Sigmoid colon (tissue), 7 donors: ENCODE measurements at regions of chr19 and their contacts with region 1.

Region 1: DNA sequence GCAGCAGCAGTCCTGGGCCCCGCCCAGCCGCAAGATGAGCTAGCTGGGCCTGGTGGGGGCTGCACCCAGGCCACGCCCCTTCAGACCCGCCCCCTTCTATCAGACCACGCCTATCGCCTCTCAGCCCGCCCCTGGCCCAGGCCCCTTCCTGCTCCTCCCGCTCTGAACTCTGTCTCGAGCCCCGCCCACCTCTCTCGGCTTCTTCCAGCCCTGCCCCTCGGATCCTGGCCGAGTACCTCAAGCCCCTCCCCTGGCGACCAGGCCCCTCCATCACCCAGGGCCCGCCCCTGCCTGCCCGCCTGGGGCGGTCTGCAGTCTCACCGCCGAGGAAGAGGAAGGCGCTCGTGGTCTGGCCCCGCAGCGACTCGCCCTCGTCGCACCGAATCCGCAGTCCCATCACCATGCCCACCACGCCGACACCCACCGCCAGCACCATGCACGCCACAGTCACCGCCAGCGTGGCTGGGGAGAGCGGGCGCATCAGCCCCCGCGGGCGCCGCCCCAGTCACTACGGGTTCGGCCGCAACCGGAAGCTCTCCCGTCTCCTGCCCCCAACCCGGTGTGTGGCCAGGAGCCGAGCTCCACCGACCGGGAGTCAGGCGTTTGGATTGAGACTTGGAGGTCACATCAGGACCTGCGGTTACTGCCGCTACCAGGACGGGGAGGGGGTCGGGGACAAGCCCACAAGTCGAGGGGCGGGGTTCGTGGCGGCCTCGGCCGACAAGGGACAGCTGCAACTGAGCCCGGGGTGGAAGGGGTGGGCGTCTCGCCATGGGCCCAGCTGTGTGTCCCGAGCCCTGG is 1.0 kb downstream of the CLDND2 start:
- DNase-seq: peak; percentile 100
- H3K4me3 ChIP-seq: peak overlapping the region; percentile 64 to 93 (median 74)
- H3K27ac ChIP-seq: peak overlapping the region; percentile 97 to 100 (median 98)
- H3K4me1 ChIP-seq: peaks cover 0 to 46% (median 26%) of the 10 kb centered on the region in 4 donors
- H3K27me3 ChIP-seq: no peaks in the 10 kb centered on the region
- CTCF ChIP-seq: no peak
- EP300 ChIP-seq: no peak
- POLR2A ChIP-seq: no peak

Region 2: DNA sequence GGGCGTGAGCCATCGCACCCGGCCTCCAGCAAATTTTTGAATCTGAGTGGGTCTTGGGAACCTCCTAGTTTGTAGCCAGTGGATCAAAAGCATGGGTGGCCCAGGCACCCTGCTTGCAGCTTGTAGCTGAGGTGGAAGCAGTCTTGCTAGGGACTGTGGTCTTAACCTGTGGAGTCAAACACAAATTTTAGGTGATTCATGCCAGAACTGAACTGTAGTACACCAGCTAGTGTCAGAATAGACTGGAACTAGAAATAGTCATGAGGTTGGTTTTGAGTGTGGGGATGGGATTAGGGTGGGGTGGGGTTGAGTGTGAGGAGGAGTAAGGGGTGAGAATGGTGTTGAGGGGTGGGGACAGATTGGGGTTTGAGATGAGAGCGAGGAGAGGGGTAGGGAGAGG is 14.2 kb after region 1 on chr19:
- intact Hi-C with region 1: no loop called
- DNase-seq: no peak
- H3K4me3 ChIP-seq: no peak overlapping the region
- H3K27ac ChIP-seq: no peak overlapping the region
- H3K4me1 ChIP-seq: no peaks in the 10 kb centered on the region
- H3K27me3 ChIP-seq: no peaks in the 10 kb centered on the region
- CTCF ChIP-seq: no peak
- EP300 ChIP-seq: no peak
- POLR2A ChIP-seq: no peak

Region 3: DNA sequence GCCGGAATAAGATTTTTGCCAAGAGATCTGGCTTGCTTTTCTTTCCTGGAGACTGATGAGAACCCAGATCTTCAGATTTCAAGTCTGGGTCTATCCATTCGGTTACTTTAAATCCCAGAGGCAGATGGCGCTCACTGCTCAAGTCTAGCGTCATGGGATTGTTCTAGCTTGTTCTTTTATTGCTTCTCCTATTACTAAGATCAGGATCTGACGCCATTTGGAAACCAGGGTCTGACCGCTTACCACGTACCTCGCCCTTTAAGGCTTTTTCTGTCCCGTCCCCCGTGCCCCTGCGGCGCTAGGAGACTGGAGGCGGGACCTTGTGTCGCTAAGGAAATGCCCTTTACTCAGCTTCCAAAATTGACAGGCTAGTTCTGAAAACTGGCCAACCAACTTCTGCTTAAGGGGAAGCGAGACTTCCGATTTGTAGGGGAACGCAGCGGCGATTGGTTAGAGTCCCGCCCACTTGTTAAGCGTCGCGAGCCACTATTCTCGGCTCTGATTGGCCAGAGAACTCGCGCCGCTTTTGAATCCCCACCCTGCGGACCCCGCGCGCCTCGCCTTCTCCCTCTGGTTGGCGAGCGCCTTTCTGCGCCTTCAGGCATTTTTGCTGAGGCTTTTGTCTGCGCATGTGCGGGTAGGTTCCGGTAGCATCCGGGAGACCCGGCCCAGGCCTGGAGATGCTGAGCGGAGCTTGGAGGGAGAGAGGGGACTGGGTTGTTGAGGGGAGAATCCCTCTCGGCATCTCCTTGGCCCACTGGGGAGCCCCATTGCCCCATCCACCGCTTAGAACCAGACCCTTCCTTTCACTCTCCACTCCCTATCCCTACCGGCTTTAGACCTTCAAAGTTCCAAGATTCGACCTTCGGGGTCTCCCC is 26.4 kb after region 1 on chr19:
- intact Hi-C with region 1: loop called (anchors 2 kb)
- DNase-seq: peak; percentile 97
- H3K4me3 ChIP-seq: peak overlapping the region; percentile 6 to 42 (median 34)
- H3K27ac ChIP-seq: peak overlapping the region; percentile 65 to 81 (median 76)
- H3K4me1 ChIP-seq: peaks cover 0 to 12% (median 8%) of the 10 kb centered on the region in 4 donors
- H3K27me3 ChIP-seq: no peaks in the 10 kb centered on the region
- CTCF ChIP-seq: no peak
- EP300 ChIP-seq: peak in 1 of 4 donors; percentile 29
- POLR2A ChIP-seq: no peak

Region 4: GRCh38 chr19:51570962-51571575 is 203.3 kb after region 1 on chr19 and contains the start of gene ZNF175:
- intact Hi-C with region 1: loop called (anchors 10 kb)
- DNase-seq: peak; percentile 97
- H3K4me3 ChIP-seq: peak within 1 kb of the TSS; percentile 51 to 75 (median 68)
- H3K27ac ChIP-seq: peak within 1 kb of the TSS; percentile 63 to 78 (median 76)
- H3K4me1 ChIP-seq: peaks cover 0 to 17% (median 13%) of the 10 kb centered on the region in 4 donors
- H3K27me3 ChIP-seq: no peaks in the 10 kb centered on the region
- CTCF ChIP-seq: no peak
- EP300 ChIP-seq: no peak
- POLR2A ChIP-seq: no peak
- total RNA-seq, gene ZNF175: 3.3 to 5.8 (median 5.2) TPM

Region 5: DNA sequence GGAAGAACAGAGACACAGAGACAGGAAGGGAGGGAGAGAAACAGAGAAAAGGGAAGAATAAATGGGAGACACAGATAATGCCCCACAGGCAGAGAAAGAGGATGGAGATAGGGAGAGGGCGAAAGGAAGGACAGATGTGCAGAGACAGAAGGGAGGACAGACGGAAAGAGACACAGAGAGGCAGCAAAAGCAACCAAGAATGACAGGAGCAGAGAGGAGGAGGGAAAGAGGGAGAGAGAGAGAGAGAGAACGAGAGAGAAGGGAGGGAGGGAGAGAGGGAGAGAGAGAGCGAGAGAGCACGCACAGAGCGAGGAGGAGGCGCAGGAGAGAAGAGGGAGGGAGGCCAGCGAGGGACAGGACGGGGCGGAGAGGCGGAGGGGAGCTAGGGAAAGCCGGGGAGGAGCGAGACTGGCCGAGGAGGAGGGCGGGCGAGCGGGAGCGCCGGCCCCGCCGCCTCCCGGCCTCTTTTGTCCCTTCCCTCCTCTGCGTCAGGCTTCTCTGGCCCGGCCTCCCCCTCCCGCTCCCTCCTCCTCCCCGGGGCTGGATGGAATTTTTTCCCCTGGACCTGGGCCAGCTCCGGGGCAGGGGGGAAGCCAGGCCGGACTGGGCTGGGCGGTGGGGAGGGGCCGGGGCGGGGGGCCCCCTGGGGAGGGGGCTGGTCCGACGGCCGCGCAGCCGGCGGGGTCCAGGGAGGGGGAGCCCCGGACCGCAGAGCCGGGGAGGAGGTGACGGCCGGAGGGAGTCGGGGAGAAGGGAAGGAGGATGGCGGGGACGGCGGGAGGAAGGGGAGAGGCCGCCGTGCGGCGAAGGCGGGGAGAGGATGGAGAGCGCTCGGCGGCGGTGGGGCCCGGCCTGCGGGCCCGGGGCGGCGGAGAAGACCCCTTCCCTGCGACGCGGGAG is 321.2 kb after region 1 on chr19:
- intact Hi-C with region 1: loop called (anchors 1 kb)
- DNase-seq: peak; percentile 97
- H3K4me3 ChIP-seq: peak overlapping the region; percentile 89 to 97 (median 96)
- H3K27ac ChIP-seq: peak overlapping the region; percentile 98 to 100 (median 100)
- H3K4me1 ChIP-seq: peaks cover 0 to 44% (median 40%) of the 10 kb centered on the region in 4 donors
- H3K27me3 ChIP-seq: no peaks in the 10 kb centered on the region
- CTCF ChIP-seq: no peak
- EP300 ChIP-seq: peak in 1 of 4 donors; percentile 36
- POLR2A ChIP-seq: peak; percentile 53 to 56